Naive thymus-derived CD4-positive, alpha-beta T cell (primary cell): ENCODE measurements at regions of chr3 and their contacts with region 1.

Region 1: GRCh38 chr3:33636125-33636850 is 81.8 kb downstream of the CLASP2 start:
- DNase-seq: peak in 7 of 9 donors; percentile 16 to 40 (median 30)
- ATAC-seq: peak; percentile 68
- H3K4me3 ChIP-seq: no peak overlapping the region
- H3K4me3 Mint-ChIP-seq: no peak overlapping the region
- H3K27ac ChIP-seq: no peak overlapping the region
- H3K27ac Mint-ChIP-seq: no peak overlapping the region
- H3K4me1 ChIP-seq: no peaks in the 10 kb centered on the region
- H3K4me1 Mint-ChIP-seq: peaks cover 0 to 7% (median 0%) of the 10 kb centered on the region in 7 donors
- H3K27me3 ChIP-seq: no peaks in the 10 kb centered on the region
- H3K27me3 Mint-ChIP-seq: no peaks in the 10 kb centered on the region

Region 2: GRCh38 chr3:33773637-33774036 is 137.3 kb after region 1 on chr3:
- CTCF ChIA-PET with region 1: interaction called, 5 read pairs
- POLR2A ChIA-PET with region 1: no interaction called
- intact Hi-C with region 1: loop called (anchors 1 kb)
- DNase-seq: no peak
- ATAC-seq: no peak
- H3K4me3 ChIP-seq: no peak overlapping the region
- H3K4me3 Mint-ChIP-seq: no peak overlapping the region
- H3K27ac ChIP-seq: no peak overlapping the region
- H3K27ac Mint-ChIP-seq: peak overlapping the region in 1 of 9 donors; percentile 53
- H3K4me1 ChIP-seq: no peaks in the 10 kb centered on the region
- H3K4me1 Mint-ChIP-seq: no peaks in the 10 kb centered on the region
- H3K27me3 ChIP-seq: no peaks in the 10 kb centered on the region
- H3K27me3 Mint-ChIP-seq: peaks cover 0 to 12% (median 0%) of the 10 kb centered on the region in 5 donors

Region 3: GRCh38 chr3:34200576-34200975 is 564.3 kb after region 1 on chr3:
- CTCF ChIA-PET with region 1: no interaction called
- POLR2A ChIA-PET with region 1: no interaction called
- intact Hi-C with region 1: no loop called
- DNase-seq: no peak
- ATAC-seq: no peak
- H3K4me3 ChIP-seq: no peak overlapping the region
- H3K4me3 Mint-ChIP-seq: no peak overlapping the region
- H3K27ac ChIP-seq: no peak overlapping the region
- H3K27ac Mint-ChIP-seq: no peak overlapping the region
- H3K4me1 ChIP-seq: no peaks in the 10 kb centered on the region
- H3K4me1 Mint-ChIP-seq: peaks cover 0 to 4% (median 0%) of the 10 kb centered on the region in 7 donors
- H3K27me3 ChIP-seq: no peaks in the 10 kb centered on the region
- H3K27me3 Mint-ChIP-seq: no peaks in the 10 kb centered on the region